Testis (tissue), 5 donors: ENCODE measurements at regions of chr19 and their contacts with region 1.

Region 1: DNA sequence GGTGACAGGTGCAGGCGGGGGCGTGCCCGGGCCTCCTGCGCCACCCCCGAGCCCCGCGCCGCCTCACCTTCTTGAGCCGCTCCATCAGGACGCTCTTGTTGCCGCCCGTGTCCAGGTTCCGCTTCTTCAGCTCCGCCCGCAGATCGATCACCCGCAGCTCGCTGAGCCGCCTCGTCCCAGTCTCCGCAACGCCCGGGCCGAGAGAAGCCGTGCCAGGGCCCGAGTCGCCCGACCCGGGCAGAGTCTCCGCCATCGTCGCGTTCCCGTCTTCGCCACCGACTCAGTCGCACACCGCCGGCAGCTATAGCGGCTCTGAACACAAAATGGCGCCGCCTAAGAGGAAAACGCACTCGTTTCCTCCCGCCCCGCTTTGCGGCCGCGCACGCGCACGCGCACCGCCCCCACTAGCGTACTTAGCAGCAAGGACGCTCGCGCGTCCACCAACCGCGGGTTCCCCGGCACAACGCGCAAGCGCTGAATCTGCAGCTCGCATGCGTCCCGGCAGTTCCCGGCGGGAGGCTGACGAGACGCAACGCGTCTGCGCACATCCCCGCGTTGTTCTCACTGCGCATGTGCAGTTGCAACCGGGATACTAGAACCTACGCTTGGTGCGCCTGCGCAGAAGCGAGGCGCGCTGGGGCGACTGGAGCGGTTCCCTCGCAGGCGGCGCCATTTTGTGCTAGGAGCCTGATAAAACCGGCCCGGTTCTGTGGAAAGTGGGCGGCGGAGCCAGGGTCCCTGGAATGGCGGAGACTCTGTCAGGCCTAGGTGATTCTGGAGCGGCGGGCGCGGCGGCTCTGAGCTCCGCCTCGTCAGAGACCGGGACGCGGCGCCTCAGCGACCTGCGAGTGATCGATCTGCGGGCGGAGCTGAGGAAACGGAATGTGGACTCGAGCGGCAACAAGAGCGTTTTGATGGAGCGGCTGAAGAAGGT is at the starts of genes SAFB and SAFB2:
- DNase-seq: peak; percentile 98
- H3K4me3 ChIP-seq: peak within 1 kb of the TSS; percentile 97 to 99
- H3K27ac ChIP-seq: peak within 1 kb of the TSS; percentile 98 to 99
- H3K4me1 ChIP-seq: peaks cover 43% of the 10 kb centered on the region
- H3K27me3 ChIP-seq: no peaks in the 10 kb centered on the region
- CTCF ChIP-seq: no peak
- POLR2A ChIP-seq: peak; percentile 75
- total RNA-seq, gene SAFB: 202 to 220 TPM
- total RNA-seq, gene SAFB2: 173 to 209 TPM

Region 2: DNA sequence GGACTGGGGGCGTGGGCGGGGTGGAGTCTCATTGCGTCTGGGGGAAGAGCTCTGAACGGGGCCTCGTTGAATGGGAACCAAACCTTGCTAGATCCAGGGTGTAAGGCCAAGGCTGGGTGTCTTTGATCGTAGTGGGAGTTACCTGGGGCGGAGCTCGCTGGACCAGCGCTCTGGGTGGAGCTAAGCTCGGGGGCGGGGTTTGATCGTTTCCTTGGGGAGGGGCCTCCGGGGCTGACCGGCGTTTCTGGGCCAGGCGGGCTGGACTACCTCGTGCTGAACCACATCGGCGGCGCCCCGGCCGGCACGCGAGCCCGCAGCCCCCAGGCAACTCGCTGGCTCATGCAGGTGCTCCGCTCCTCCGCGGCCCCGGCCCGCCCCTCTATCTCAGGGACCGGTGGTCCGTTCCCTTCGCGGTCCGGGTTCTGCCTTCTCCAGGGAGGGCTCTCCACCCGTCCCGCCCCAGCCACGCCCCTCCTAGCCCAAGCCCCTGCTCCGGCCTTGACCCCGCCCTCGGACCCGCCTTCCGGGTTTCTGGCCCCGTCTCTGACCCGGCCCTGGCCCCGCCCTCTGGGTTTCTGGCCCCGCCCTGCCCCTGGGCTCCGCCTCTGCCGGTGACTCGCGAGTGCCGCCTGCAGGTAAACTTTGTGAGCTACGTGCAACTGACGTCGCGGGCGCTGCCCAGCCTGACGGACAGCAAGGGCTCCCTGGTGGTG is 64.1 kb after region 1 on chr19:
- intact Hi-C with region 1: loop called (anchors 5 kb)
- DNase-seq: peak; percentile 96
- H3K4me3 ChIP-seq: peak overlapping the region; percentile 47 to 58
- H3K27ac ChIP-seq: peak overlapping the region in 1 of 2 donors; percentile 73
- H3K4me1 ChIP-seq: peaks cover 9% of the 10 kb centered on the region
- H3K27me3 ChIP-seq: no peaks in the 10 kb centered on the region
- CTCF ChIP-seq: peak; percentile 68 to 78 (median 73)
- POLR2A ChIP-seq: no peak